ENCODE measurements at regions of chr15 and their contacts with region 1.

Region 1: GRCh38 chr15:40506964-40507571 is 36.3 kb downstream of the CHST14 start:
- DNase-seq: peak; percentile 42 to 56
- ATAC-seq: peak; percentile 53 to 71
- H3K4me3 ChIP-seq: peak overlapping the region; percentile 35 to 52 (median 44)
- H3K27ac ChIP-seq: peak overlapping the region in 2 of 4 donors; percentile 33 to 35
- H3K4me1 ChIP-seq: peaks cover 6 to 20% of the 10 kb centered on the region in 2 donors
- H3K27me3 ChIP-seq: no peaks in the 10 kb centered on the region
- CTCF ChIP-seq: peak; percentile 21 to 85 (median 48)
- POLR2A ChIP-seq: no peak

Region 2: GRCh38 chr15:40440743-40441564 is 66.1 kb before region 1 on chr15 and contains the start of gene BAHD1:
- in situ Hi-C with region 1: no loop called
- intact Hi-C with region 1: loop called (anchors 2 kb)
- DNase-seq: peak; percentile 95 to 96
- ATAC-seq: peak; percentile 83 to 86
- H3K4me3 ChIP-seq: peak within 1 kb of the TSS; percentile 74 to 98 (median 81)
- H3K27ac ChIP-seq: peak within 1 kb of the TSS; percentile 76 to 86 (median 82)
- H3K4me1 ChIP-seq: peaks cover 14 to 20% of the 10 kb centered on the region in 2 donors
- H3K27me3 ChIP-seq: peaks cover 14 to 23% (median 18%) of the 10 kb centered on the region in 3 donors
- CTCF ChIP-seq: peak in 1 of 5 experiments; percentile 13
- POLR2A ChIP-seq: peak; percentile 46 to 47
- total RNA-seq, gene BAHD1: 8.8 to 27.4 (median 13.5) TPM

Region 3: DNA sequence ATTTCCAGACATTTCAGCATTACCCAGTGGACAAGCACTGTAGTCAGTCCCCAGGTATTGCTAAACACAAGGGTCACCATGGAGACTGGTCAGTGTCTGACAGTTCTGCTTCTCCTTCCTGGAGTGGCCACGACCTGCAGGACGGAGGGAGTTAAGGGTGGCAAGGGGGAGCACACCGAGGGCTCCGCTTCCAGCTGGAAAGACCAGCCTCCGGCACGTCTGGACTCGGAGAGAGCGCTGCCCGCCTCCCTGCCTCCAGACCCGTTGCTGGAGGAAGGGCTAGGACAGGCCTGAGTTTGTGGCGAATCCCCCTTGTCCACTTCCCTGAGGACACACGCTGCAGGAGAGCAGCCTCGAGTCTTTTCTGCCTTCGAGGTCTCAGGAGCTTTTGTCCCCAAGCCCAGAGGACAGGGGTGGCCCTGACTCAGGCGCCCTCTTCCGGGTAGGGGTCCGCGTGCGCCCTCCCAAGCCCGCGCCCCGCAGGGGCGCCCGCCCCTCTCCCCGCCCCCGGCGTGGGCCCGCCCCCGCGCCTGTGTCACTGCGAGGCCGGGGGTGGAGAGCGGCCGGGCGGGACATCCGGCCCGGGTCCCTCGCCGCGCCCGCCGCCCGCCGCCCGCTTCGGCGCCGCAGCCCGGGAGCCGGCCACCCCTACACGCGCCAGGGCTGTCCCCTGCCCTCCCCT is 36.5 kb before region 1 on chr15 and contains the start of gene CHST14:
- in situ Hi-C with region 1: no loop called
- intact Hi-C with region 1: loop called (anchors 2 kb)
- DNase-seq: peak in 1 of 2 donors; percentile 27
- ATAC-seq: peak; percentile 62 to 75
- H3K4me3 ChIP-seq: peak within 1 kb of the TSS; percentile 73 to 87 (median 80)
- H3K27ac ChIP-seq: peak within 1 kb of the TSS; percentile 73 to 79 (median 78)
- H3K4me1 ChIP-seq: peaks cover 4 to 11% of the 10 kb centered on the region in 2 donors
- H3K27me3 ChIP-seq: no peaks in the 10 kb centered on the region
- CTCF ChIP-seq: no peak
- POLR2A ChIP-seq: peak in 1 of 2 donors; percentile 7
- total RNA-seq, gene CHST14: 3.0 to 5.2 (median 3.9) TPM

Region 4: DNA sequence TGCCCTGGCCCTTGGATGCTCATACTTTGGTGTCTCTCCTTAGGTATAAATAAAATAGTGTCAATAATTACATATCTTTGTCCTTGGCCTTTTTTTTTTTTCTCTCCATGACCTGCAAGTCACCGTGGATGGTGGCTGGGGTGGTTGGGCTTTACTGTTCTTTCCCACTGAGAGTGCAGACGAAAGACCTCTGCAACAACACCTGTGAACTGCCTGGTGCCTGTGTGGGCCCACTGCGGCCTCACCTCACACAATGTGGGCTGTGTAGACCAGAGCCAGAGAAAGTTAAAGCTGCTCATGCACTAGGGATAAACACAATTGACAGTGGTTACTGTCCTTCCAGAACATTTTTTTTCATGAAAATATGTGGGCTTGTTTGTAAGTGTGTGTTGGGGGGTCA is 18.8 kb after region 1 on chr15:
- in situ Hi-C with region 1: no loop called
- intact Hi-C with region 1: no loop called
- DNase-seq: no peak
- ATAC-seq: no peak
- H3K4me3 ChIP-seq: no peak overlapping the region
- H3K27ac ChIP-seq: no peak overlapping the region
- H3K4me1 ChIP-seq: no peaks in the 10 kb centered on the region
- H3K27me3 ChIP-seq: no peaks in the 10 kb centered on the region
- CTCF ChIP-seq: no peak
- POLR2A ChIP-seq: no peak

Region 5: GRCh38 chr15:40578892-40579291 is 71.8 kb after region 1 on chr15:
- in situ Hi-C with region 1: loop called in 1 of 4 experiments (anchors 10 kb)
- intact Hi-C with region 1: no loop called
- DNase-seq: no peak
- ATAC-seq: no peak
- H3K4me3 ChIP-seq: no peak overlapping the region
- H3K27ac ChIP-seq: no peak overlapping the region
- H3K4me1 ChIP-seq: no peaks in the 10 kb centered on the region
- H3K27me3 ChIP-seq: no peaks in the 10 kb centered on the region
- CTCF ChIP-seq: no peak
- POLR2A ChIP-seq: no peak